ENCODE measurements at regions of chr19 and their contacts with region 1.

Region 1: DNA sequence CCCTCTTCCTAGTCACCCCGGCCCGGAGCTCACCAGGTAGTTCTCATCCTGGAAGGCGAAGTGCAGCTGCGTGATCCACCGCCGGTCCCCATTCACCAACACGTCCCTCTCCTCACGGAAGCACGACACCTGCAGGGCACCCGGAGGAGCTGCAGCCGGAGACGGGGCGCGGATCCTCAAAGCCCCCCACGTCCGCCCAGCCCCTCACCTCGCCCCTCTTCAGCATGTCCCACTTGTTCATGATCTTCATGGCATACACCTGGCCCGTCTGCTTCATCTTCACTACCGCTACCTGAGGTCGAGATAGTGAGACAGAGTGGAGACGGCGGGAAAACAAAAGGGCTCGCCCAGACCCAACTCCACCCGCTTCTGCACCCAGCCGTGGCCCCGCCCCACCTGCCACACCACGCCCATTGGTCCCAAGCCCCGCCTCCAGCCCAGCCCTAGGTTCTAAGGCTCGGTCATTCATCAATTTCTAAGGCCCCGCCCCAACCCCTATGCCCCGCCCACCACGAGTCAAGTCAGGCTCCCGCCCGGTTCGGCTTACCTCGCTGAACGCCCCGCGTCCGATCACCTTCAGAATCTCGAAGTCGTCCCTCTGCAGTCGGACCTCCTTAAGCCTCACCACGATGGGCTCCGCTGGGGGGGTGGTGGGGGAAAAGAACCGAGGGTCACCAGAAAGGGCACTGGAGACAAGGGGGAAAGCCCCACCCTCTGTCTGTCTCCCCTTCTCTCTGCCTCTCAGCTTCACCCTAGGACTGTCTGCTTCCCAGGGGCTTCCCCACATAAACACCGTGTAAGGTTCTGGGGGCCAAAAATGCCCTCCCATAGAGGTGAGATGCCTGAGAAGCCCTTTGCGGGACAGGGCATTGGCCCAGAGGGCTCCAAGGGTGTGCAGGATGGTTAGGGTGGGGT is 2.8 kb downstream of the DMPK start:
- DNase-seq: peak; percentile 98
- ATAC-seq: peak; percentile 85
- H3K4me3 Mint-ChIP-seq: peak overlapping the region; percentile 78
- H3K27ac Mint-ChIP-seq: peak overlapping the region; percentile 47; the same call in 1 of the 2 replicates
- H3K4me1 Mint-ChIP-seq: peaks cover 33% of the 10 kb centered on the region
- H3K27me3 Mint-ChIP-seq: peaks cover 35% of the 10 kb centered on the region
- CTCF ChIP-seq: peak; percentile 72; the same call in 1 of the 2 replicates

Region 2: DNA sequence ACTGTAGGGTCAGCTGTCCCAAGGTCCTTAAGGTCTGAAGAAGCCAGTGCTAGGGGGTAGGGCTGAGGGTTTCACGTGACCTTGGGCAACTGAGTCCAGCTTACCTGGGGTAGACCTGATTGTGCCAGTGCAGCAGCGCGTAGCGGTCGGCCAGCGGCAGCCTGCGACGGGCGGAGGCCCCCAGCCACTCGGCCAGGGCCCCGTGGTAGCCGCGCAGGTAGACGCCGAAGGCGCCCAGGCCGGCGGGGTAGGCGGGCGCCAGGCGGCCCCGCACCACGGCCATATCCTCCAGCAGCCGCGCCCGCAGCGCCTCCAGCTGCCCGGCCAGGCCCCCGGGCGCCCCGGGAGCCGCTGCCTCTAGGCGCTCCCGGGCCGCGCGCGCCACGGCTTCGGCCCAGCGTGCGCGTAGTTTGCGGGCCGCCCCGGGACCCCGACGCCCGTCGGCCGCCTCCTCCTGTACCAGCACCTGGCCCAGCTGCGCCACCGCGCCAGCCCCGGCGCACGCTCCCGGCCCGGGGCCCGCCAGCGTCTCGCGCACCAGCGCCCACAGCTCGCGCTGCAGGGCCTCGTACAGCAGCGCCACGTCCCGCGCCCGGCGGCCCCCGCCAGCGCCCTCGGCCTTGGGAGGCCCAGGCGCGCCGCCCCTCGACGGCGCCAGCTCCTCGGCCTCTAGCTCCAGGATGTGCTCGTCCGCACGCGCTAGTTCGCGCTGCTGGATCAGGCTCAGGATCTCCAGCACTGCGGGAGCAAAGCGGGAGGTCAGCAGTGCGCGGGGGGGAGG is 545.2 kb before region 1 on chr19:
- CTCF ChIA-PET with region 1: no interaction called
- POLR2A ChIA-PET with region 1: no interaction called
- DNase-seq: peak; percentile 43
- ATAC-seq: peak; percentile 71
- H3K4me3 Mint-ChIP-seq: peak overlapping the region; percentile 60
- H3K27ac Mint-ChIP-seq: no peak overlapping the region
- H3K4me1 Mint-ChIP-seq: peaks cover 18% of the 10 kb centered on the region
- H3K27me3 Mint-ChIP-seq: peaks cover 83% of the 10 kb centered on the region
- CTCF ChIP-seq: no peak

Region 3: DNA sequence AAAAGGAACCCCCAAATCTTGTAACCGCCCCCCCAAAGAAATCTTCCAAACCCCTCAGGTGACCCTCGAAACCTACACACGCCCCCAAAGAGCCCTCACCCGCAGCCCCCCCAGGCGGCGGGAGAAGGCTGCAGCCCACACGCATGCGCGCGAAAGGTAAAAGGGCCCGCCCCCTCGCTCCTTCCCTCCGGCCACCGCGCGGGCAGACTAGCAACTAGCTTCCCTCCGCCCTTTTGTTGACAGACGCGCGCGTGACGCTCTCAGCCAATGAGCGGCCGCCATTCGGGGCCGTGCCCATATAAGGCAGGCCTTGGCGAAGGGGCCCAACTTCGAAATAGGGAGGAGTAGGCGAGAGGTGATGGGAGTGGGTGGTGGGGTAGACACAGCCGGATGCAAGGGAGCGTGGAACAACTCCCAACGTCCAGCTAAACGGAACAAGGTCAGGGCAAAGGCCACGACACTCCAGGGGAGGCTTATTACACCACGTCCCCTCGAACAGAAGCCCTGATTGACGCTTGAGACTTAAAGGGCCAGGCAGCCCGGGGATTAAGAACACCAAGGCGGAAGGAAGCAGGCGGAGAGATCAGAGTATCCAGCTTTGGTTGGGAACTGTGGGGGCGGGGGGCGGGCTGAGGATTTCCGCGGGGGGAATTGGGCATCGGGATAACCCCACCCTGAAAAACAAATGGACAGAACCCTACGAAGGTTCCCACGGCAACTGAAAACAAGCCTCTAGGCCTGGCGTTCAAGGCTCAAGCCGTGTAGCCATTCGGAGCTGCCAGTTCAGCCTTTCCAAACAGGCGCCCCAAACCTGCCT is 62.1 kb before region 1 on chr19:
- CTCF ChIA-PET with region 1: interaction called, 18 read pairs
- POLR2A ChIA-PET with region 1: interaction called, 3 read pairs
- DNase-seq: peak; percentile 99
- ATAC-seq: peak; percentile 98
- H3K4me3 Mint-ChIP-seq: peak overlapping the region; percentile 97
- H3K27ac Mint-ChIP-seq: peak overlapping the region; percentile 97
- H3K4me1 Mint-ChIP-seq: peaks cover 25% of the 10 kb centered on the region
- H3K27me3 Mint-ChIP-seq: no peaks in the 10 kb centered on the region; the same call in 1 of the 2 replicates
- CTCF ChIP-seq: no peak

Region 4: DNA sequence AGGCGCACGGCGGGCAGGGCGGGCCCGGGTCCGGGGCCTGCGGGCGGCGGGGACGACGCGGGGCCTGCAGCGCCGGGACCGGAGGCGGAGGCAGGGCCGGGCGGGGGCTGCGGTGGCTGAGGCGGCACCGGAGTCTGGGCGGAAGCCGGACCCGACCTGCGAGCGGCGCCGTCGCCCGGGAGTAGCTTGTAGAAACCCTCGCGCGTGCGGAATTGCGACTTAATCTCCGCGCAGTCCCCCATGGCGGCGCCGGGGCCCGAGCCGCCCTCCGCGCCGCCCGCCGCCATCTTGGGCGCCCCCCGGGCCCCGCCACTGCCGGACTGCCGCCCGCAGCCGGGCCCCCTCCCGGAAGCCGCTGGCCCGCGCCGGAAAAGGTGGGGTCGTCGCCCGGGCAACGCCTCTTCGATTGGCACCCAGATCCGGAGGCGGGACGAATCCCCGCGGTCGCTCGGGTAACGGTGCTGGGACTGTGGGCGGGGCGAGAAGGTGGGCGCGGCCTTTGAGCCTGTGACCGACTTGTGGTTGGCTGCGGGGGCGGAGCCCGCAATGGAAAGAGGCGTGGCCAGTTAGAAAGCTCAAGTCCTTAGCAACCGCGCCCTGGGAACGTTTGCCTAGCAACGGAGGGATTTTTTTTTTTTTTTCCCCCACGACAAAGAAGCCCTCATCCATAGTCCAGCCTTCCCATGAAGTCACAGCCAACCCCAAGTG is 13.1 kb after region 1 on chr19 and contains the start of gene DMWD:
- CTCF ChIA-PET with region 1: interaction called, 12 read pairs
- POLR2A ChIA-PET with region 1: interaction called, 6 read pairs
- DNase-seq: peak; percentile 100
- ATAC-seq: peak; percentile 98
- H3K4me3 Mint-ChIP-seq: peak within 1 kb of the TSS; percentile 91
- H3K27ac Mint-ChIP-seq: peak within 1 kb of the TSS; percentile 61
- H3K4me1 Mint-ChIP-seq: peaks cover 17% of the 10 kb centered on the region
- H3K27me3 Mint-ChIP-seq: peaks cover 33% of the 10 kb centered on the region
- CTCF ChIP-seq: no peak
- total RNA-seq, gene DMWD: 50.2 to 60.7 TPM (median 56.6 TPM) in 3 replicates

Region 5: GRCh38 chr19:45798995-45799517 is 19.6 kb after region 1 on chr19:
- CTCF ChIA-PET with region 1: interaction called, 29 read pairs
- POLR2A ChIA-PET with region 1: no interaction called
- DNase-seq: peak; percentile 75
- ATAC-seq: peak; percentile 86
- H3K4me3 Mint-ChIP-seq: no peak overlapping the region; the same call in 1 of the 2 replicates
- H3K27ac Mint-ChIP-seq: no peak overlapping the region
- H3K4me1 Mint-ChIP-seq: peaks cover 6% of the 10 kb centered on the region
- H3K27me3 Mint-ChIP-seq: peaks cover 57% of the 10 kb centered on the region
- CTCF ChIP-seq: peak; percentile 71